ENCODE measurements at regions of chr3 and their contacts with region 1.

Region 1: GRCh38 chr3:197029511-197030167 is at the start of gene MELTF:
- DNase-seq: no peak
- H3K4me3 ChIP-seq: peak within 1 kb of the TSS; percentile 49
- H3K27me3 ChIP-seq: no peaks in the 10 kb centered on the region
- CTCF ChIP-seq: peak; percentile 55
- polyA plus RNA-seq, gene MELTF: 1.5 and 1.8 TPM in 2 replicates

Region 2: GRCh38 chr3:196399485-196399945 is 630.1 kb before region 1 on chr3:
- CTCF ChIA-PET with region 1: no interaction called
- POLR2A ChIA-PET with region 1: no interaction called
- DNase-seq: peak; percentile 9
- H3K4me3 ChIP-seq: no peak overlapping the region
- H3K27me3 ChIP-seq: no peaks in the 10 kb centered on the region
- CTCF ChIP-seq: no peak

Region 3: GRCh38 chr3:197008436-197009224 is 21.0 kb before region 1 on chr3:
- CTCF ChIA-PET with region 1: interaction called, 12 read pairs
- POLR2A ChIA-PET with region 1: no interaction called
- DNase-seq: no peak
- H3K4me3 ChIP-seq: no peak overlapping the region
- H3K27me3 ChIP-seq: no peaks in the 10 kb centered on the region
- CTCF ChIP-seq: no peak

Region 4: DNA sequence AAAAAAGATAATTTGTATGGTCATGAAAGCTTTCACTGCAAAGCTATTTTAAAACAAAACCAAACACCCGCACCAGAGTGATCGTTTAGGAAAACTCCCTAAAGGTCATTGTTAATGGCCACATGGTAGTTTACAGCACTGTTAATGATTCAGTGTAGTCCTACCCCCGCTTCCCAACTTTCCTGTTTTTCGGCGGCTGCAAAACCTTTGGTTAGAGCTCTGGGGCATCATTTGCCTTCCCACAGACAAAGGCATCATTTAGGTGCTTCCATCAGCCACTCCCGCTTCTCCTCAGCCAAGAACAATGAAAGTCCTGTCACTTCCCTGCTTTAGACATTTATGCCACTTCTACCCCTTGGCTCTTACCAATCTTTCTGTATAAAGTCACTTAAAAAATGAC is 10.6 kb before region 1 on chr3:
- CTCF ChIA-PET with region 1: interaction called, 11 read pairs
- POLR2A ChIA-PET with region 1: no interaction called
- DNase-seq: no peak
- H3K4me3 ChIP-seq: no peak overlapping the region
- H3K27me3 ChIP-seq: peaks cover 8% of the 10 kb centered on the region
- CTCF ChIP-seq: no peak

Region 5: GRCh38 chr3:197050511-197050910 is 20.9 kb after region 1 on chr3:
- CTCF ChIA-PET with region 1: interaction called, 14 read pairs
- POLR2A ChIA-PET with region 1: no interaction called
- DNase-seq: no peak
- H3K4me3 ChIP-seq: no peak overlapping the region
- H3K27me3 ChIP-seq: no peaks in the 10 kb centered on the region
- CTCF ChIP-seq: no peak

Region 6: DNA sequence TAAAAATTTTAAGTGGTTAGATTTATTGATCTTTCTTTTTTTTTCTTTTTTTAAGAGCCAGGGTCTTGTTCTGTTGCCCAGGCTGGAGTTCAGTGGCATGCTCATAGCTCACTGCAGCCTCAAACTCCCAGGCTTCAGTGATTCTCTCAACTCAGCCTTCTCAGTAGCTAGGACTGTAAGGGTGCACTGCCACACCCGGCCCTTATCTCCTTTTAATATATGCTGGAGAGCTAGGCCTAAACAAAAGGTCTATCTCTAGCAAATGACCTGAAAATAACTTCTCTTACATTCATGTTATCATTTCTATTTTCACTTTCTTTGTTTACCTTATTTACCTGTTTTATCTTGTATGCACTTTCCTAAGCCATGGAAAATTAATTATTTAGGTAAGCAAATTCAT is 35.1 kb after region 1 on chr3:
- CTCF ChIA-PET with region 1: no interaction called
- POLR2A ChIA-PET with region 1: no interaction called
- DNase-seq: no peak
- H3K4me3 ChIP-seq: no peak overlapping the region
- H3K27me3 ChIP-seq: no peaks in the 10 kb centered on the region
- CTCF ChIP-seq: no peak

Measured in BJ (cell line).